Activated CD4-positive, alpha-beta memory T cell treated with anti-CD3 and anti-CD28 coated beads for 36 hours (primary cell): ENCODE measurements at regions of chr22 and their contacts with region 1.

Region 1: GRCh38 chr22:20783844-20784723 is 10.2 kb downstream of the SERPIND1 start:
- DNase-seq: peak; percentile 55
- H3K4me3 Mint-ChIP-seq: no peak overlapping the region
- H3K27ac Mint-ChIP-seq: no peak overlapping the region
- H3K4me1 Mint-ChIP-seq: peaks cover 17% of the 10 kb centered on the region
- H3K27me3 Mint-ChIP-seq: no peaks in the 10 kb centered on the region

Region 2: DNA sequence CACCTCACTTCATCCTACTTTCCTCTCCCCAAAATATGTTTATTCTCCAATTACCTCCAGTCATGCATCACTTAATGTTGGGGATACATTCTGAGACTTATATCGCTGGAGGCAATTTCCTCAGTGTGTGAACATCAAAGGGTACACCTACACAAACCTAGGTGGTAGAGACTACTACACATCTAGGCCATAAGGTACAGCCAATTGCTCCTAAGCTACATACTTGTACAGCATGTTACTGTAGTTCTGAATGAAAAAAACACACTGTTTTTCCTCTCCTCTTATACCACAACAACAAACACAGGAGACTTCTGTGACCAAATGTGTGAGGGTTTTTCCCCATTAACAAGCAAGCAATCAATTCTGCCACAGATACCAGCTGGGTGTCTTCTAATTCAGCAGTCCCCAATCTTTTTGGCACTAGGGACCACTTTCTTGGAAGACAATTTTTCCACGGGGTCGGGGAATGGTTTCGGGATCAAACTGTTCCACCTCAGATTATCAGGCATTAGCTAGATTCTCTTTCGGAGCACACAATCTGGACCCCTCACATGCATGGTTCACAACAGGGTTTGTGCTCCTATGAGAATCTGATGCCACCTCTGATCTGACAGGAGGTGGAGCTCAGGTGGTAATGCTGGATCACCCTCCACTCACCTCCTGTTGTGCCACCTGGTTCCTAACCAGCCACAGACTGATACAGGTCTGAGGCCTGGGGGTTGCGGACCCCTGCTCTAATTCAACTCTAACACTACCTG is 293.7 kb before region 1 on chr22:
- CTCF ChIA-PET with region 1: no interaction called
- POLR2A ChIA-PET with region 1: no interaction called
- intact Hi-C with region 1: no loop called
- DNase-seq: no peak
- H3K4me3 Mint-ChIP-seq: no peak overlapping the region
- H3K27ac Mint-ChIP-seq: no peak overlapping the region
- H3K4me1 Mint-ChIP-seq: peaks cover 54% of the 10 kb centered on the region
- H3K27me3 Mint-ChIP-seq: no peaks in the 10 kb centered on the region

Region 3: GRCh38 chr22:20624161-20624616 is 159.9 kb before region 1 on chr22:
- CTCF ChIA-PET with region 1: no interaction called
- POLR2A ChIA-PET with region 1: no interaction called
- intact Hi-C with region 1: loop called (anchors 5 kb)
- DNase-seq: peak; percentile 84
- H3K4me3 Mint-ChIP-seq: no peak overlapping the region
- H3K27ac Mint-ChIP-seq: peak overlapping the region; percentile 32
- H3K4me1 Mint-ChIP-seq: peaks cover 20% of the 10 kb centered on the region
- H3K27me3 Mint-ChIP-seq: peaks cover 2% of the 10 kb centered on the region

Region 4: DNA sequence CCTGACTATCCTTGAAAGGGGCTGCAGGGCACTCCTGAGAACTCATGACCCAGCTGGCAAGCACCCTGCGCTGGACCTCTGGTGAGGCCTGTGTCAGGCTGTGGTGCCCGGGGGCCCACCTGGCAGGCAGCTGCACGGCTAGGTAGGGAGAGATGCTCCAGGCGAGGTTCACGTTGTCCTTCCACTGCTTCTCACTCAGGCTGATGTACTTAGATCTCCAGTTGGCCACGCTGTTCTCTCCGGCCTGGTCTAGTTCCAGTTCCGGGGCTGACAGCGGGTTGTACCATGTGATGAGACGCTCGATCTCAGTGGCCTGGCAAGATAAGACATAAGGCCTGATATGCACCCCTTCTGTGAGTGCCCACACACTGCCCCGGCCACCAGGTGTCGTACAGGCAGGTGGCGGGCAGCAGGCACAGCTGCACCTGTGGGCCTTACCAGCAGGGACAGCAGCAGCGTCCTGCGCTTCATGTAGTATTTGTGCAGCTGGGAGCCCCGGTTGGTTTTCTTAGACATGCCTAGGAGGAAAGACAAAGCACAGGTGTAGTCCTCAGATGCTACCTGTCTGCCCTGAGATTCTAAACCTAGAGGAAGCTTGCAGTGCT is 54.8 kb before region 1 on chr22:
- CTCF ChIA-PET with region 1: no interaction called
- POLR2A ChIA-PET with region 1: no interaction called
- intact Hi-C with region 1: no loop called
- DNase-seq: no peak
- H3K4me3 Mint-ChIP-seq: no peak overlapping the region
- H3K27ac Mint-ChIP-seq: no peak overlapping the region
- H3K4me1 Mint-ChIP-seq: no peaks in the 10 kb centered on the region
- H3K27me3 Mint-ChIP-seq: no peaks in the 10 kb centered on the region

Region 5: DNA sequence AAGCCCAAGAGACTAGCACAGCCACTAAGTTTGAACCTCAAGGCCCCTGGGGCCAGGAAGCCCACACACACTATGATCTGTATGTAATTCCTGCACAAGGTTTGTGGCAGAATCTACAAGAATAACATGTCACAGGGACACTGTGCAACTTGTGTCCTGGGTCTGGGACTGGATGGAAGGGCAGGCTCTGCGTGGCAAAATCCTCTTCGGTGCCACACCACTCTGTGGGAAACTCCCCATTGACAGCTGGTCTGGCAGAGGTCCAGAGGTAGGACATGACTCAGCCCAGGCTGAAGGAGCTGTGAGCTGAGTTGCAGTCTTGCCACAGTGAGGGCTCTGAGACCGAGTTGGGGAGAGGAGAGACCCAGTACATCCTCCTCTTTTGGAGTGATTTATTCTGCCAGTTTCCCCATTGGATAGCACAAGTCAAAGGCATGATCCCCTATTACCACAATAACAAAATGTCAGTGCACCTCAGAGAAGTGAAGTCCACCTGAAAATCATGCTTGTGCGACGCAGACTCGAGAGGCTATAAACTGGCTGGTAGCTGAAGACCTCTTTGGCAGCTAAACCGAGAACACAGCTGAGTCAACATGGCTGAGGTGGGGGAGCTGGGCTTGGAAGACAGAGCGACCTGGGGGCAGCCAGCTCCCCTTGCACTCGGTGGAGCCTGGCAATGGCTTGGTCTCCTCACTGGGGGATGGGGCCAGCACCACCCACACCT is 33.5 kb before region 1 on chr22:
- CTCF ChIA-PET with region 1: interaction called, 7 read pairs
- POLR2A ChIA-PET with region 1: no interaction called
- intact Hi-C with region 1: loop called (anchors 1 kb)
- DNase-seq: peak; percentile 71
- H3K4me3 Mint-ChIP-seq: no peak overlapping the region
- H3K27ac Mint-ChIP-seq: peak overlapping the region; percentile 56
- H3K4me1 Mint-ChIP-seq: peaks cover 14% of the 10 kb centered on the region
- H3K27me3 Mint-ChIP-seq: no peaks in the 10 kb centered on the region

Region 6: DNA sequence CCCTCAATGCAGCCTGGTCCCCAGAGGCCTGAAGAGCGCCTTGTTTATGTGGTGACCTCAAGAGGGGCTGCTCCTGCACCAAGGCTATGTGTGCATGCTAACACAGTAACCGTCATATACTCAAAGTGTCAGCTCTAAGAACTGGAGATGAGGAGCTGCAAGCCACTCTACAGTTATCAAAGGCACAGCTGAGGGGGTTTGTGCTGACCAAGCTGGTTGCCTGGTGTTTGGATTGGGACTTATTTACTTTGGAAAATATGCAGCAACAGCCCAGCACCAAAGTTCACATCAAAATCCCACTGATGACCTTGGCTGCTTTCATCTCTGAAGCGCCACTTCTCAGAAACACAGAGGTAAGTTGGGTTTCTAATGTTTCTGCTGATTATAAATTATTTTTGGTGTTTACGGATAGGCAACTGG is 10.3 kb before region 1 on chr22 and contains the start of gene SERPIND1:
- CTCF ChIA-PET with region 1: interaction called, 11 read pairs
- POLR2A ChIA-PET with region 1: no interaction called
- intact Hi-C with region 1: no loop called
- DNase-seq: no peak
- H3K4me3 Mint-ChIP-seq: no peak within 1 kb of the TSS
- H3K27ac Mint-ChIP-seq: no peak within 1 kb of the TSS
- H3K4me1 Mint-ChIP-seq: peaks cover 6% of the 10 kb centered on the region
- H3K27me3 Mint-ChIP-seq: no peaks in the 10 kb centered on the region
- total RNA-seq, gene SERPIND1: not detected

Region 7: DNA sequence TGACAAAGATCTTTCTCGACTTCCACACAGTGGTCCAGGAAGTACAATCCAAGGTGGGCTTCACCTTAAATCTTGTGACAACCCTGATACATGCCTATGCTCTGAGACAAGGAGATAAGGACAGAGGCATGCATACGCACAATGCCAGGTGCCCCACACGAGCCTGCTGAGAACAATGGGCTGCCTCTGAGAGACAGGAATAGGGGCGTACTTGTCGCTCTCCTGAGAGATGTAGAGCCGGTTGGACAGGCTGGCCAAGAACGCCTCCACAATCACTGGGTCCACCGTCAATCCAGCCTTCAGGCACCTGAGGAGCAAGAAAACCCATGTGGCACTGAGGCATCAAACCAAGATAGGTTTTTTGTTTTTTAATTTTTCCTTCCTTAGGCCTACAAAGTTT is 15.4 kb after region 1 on chr22:
- CTCF ChIA-PET with region 1: interaction called, 29 read pairs
- POLR2A ChIA-PET with region 1: no interaction called
- intact Hi-C with region 1: no loop called
- DNase-seq: no peak
- H3K4me3 Mint-ChIP-seq: no peak overlapping the region
- H3K27ac Mint-ChIP-seq: no peak overlapping the region
- H3K4me1 Mint-ChIP-seq: no peaks in the 10 kb centered on the region
- H3K27me3 Mint-ChIP-seq: no peaks in the 10 kb centered on the region

Region 8: DNA sequence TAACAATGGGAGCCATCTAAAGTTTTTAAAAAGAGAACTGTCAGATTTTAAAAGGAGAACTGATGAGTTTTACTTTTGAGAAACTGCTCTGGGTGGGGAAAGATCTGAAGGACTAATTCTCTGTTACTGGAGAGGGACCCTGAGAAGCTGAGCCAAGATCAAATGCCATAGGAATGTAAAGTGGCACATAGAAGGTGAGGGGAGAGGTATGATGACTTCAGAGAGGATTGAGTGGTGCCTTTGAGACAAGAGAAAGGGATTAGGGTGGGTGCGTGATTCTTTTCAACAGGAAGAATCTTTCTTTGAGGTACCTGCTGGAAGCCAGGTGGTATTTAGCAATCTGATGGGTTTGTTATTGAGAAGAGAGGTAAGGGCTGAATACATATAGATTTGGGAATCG is 142.2 kb after region 1 on chr22:
- CTCF ChIA-PET with region 1: no interaction called
- POLR2A ChIA-PET with region 1: no interaction called
- intact Hi-C with region 1: no loop called
- DNase-seq: no peak
- H3K4me3 Mint-ChIP-seq: no peak overlapping the region
- H3K27ac Mint-ChIP-seq: no peak overlapping the region
- H3K4me1 Mint-ChIP-seq: peaks cover 48% of the 10 kb centered on the region
- H3K27me3 Mint-ChIP-seq: no peaks in the 10 kb centered on the region